ENCODE measurements at regions of chr16 and their contacts with region 1.

Region 1: GRCh38 chr16:72847187-72848027 is 200.5 kb downstream of the ZFHX3 start:
- DNase-seq: no peak
- H3K4me3 ChIP-seq: no peak overlapping the region
- H3K27ac ChIP-seq: peak overlapping the region; percentile 81
- H3K4me1 ChIP-seq: peaks cover 86% of the 10 kb centered on the region
- H3K27me3 ChIP-seq: no peaks in the 10 kb centered on the region
- CTCF ChIP-seq: peak; percentile 62

Region 2: GRCh38 chr16:72723781-72724180 is 123.6 kb before region 1 on chr16:
- intact Hi-C with region 1: no loop called
- DNase-seq: no peak
- H3K4me3 ChIP-seq: no peak overlapping the region
- H3K27ac ChIP-seq: no peak overlapping the region
- H3K4me1 ChIP-seq: no peaks in the 10 kb centered on the region
- H3K27me3 ChIP-seq: no peaks in the 10 kb centered on the region
- CTCF ChIP-seq: no peak

Region 3: DNA sequence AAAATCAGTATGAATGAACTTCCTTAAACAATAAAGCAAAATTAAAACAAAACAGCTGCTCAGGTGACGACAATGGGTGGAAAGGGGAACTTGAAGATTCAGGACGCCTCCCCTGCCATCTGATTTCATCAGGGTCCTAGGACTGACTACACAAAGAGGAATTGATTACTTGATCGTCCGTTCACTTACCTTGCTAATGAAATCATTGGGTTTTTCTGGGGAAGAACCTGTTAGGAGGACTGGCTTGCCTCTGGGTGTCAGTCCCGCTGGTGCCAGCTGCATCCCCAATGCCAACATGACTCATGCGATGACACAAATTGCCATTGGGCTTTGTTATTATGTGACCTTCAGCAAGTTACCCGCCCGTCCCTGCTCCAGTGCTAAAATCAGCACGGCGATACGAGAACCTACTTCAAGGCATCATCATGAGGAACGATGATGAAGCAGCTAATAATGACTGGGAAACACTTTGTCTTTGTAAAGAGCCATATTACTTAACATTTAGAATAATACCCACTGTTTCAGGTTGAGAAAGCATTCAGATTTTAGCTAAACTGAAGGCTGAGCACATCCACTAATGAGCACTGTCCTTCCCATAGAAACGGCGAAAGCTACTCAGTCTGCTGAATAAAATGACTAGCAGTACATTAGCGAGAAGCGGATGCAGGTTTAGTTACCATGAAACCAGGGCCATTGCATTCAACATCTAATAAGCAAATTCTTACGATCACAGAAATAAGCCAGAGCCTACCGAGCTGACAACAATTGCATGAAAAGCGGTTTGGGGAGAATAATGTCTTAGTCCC is 61.2 kb after region 1 on chr16:
- intact Hi-C with region 1: no loop called
- DNase-seq: no peak
- H3K4me3 ChIP-seq: no peak overlapping the region
- H3K27ac ChIP-seq: no peak overlapping the region
- H3K4me1 ChIP-seq: no peaks in the 10 kb centered on the region
- H3K27me3 ChIP-seq: no peaks in the 10 kb centered on the region
- CTCF ChIP-seq: no peak

Region 4: GRCh38 chr16:72938795-72939164 is 91.4 kb after region 1 on chr16:
- intact Hi-C with region 1: loop called (anchors 10 kb)
- DNase-seq: peak; percentile 92
- H3K4me3 ChIP-seq: peak overlapping the region; percentile 37
- H3K27ac ChIP-seq: peak overlapping the region; percentile 85
- H3K4me1 ChIP-seq: peaks cover 45% of the 10 kb centered on the region
- H3K27me3 ChIP-seq: no peaks in the 10 kb centered on the region
- CTCF ChIP-seq: no peak

Region 5: GRCh38 chr16:72974142-72974769 is 126.8 kb after region 1 on chr16:
- intact Hi-C with region 1: no loop called
- DNase-seq: no peak
- H3K4me3 ChIP-seq: no peak overlapping the region
- H3K27ac ChIP-seq: no peak overlapping the region
- H3K4me1 ChIP-seq: peaks cover 63% of the 10 kb centered on the region
- H3K27me3 ChIP-seq: no peaks in the 10 kb centered on the region
- CTCF ChIP-seq: no peak

Region 6: GRCh38 chr16:73289232-73289631 is 441.8 kb after region 1 on chr16:
- intact Hi-C with region 1: no loop called
- DNase-seq: no peak
- H3K4me3 ChIP-seq: no peak overlapping the region
- H3K27ac ChIP-seq: no peak overlapping the region
- H3K4me1 ChIP-seq: no peaks in the 10 kb centered on the region
- H3K27me3 ChIP-seq: peaks cover 26% of the 10 kb centered on the region
- CTCF ChIP-seq: no peak